Activated T-helper 1 cell treated with anti-CD3 and anti-CD28 coated beads, Interleukin-12 subunit alpha, Interleukin-12 subunit beta, Interleukin-2, Interleukin-4 antibody, amounts not matched to agents 30 ng/mL and 10 ng/mL and 1 ng/mL, durations not matched to agents 14 hours and 24 hours and 36 hours (primary cell): ENCODE measurements at regions of chr6 and their contacts with region 1.

Region 1: GRCh38 chr6:47787620-47788497 is 6.0 kb downstream of the OPN5 start:
- DNase-seq: peak; percentile 28
- H3K4me3 Mint-ChIP-seq: no peak overlapping the region
- H3K27ac Mint-ChIP-seq: no peak overlapping the region
- H3K4me1 Mint-ChIP-seq: peaks cover 6% of the 10 kb centered on the region
- H3K27me3 Mint-ChIP-seq: peaks cover 33% of the 10 kb centered on the region

Region 2: DNA sequence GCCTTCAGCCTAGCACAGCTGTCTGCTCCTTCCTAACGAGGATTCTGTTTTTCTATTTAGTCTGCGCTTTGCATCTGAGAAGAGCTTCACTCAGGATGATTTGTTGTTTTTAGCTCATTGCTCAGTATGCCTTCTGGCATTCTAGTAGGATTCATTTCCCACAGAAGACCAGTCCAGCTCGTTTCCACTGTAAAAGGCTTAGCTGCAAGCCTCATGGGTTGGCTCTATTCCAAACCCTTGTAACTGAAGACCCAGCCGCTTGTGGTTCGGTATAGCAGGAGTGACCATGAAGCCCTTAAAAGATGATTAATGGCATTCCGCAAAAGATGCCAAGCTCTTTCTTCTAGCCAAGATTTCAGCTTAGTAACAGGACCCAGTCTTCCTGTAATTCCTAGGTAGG is 752.9 kb before region 1 on chr6:
- intact Hi-C with region 1: no loop called
- DNase-seq: no peak
- H3K4me3 Mint-ChIP-seq: no peak overlapping the region
- H3K27ac Mint-ChIP-seq: no peak overlapping the region
- H3K4me1 Mint-ChIP-seq: no peaks in the 10 kb centered on the region
- H3K27me3 Mint-ChIP-seq: peaks cover 6% of the 10 kb centered on the region

Region 3: GRCh38 chr6:47524136-47524845 is 263.6 kb before region 1 on chr6:
- intact Hi-C with region 1: no loop called
- DNase-seq: no peak
- H3K4me3 Mint-ChIP-seq: no peak overlapping the region
- H3K27ac Mint-ChIP-seq: no peak overlapping the region
- H3K4me1 Mint-ChIP-seq: peaks cover 10% of the 10 kb centered on the region
- H3K27me3 Mint-ChIP-seq: no peaks in the 10 kb centered on the region

Region 4: GRCh38 chr6:48765352-48765961 is 977.6 kb after region 1 on chr6:
- intact Hi-C with region 1: loop called (anchors 10 kb)
- DNase-seq: no peak
- H3K4me3 Mint-ChIP-seq: no peak overlapping the region
- H3K27ac Mint-ChIP-seq: no peak overlapping the region
- H3K4me1 Mint-ChIP-seq: no peaks in the 10 kb centered on the region
- H3K27me3 Mint-ChIP-seq: no peaks in the 10 kb centered on the region

Region 5: DNA sequence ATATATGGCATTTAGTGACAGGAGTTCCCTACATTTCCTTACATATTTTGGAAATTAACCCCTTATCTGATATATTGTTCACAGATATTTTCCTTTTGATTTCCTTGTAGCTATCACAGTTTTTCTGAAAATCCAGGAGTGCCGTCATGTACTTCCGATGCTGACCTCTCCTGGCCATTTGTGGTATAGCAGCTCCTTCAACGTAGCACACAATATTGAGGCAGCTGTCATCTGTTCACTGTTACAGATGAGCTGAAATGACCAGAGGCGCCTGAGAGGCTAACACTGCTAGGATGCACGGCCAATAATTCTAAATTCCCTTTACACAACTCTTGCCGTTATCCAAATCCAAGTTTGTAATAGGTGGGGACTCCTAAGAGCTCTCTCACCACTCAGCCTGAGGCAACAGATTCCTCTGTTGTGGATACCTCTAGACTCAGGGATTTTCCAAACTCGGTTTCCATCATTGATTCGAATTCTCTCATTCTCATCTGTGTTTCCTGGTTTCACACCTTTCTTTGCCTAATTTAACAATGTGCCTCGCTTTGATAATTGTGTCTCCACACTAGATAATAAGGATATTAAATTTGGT is 1622.2 kb after region 1 on chr6:
- intact Hi-C with region 1: loop called (anchors 1 kb)
- DNase-seq: peak; percentile 21
- H3K4me3 Mint-ChIP-seq: no peak overlapping the region
- H3K27ac Mint-ChIP-seq: no peak overlapping the region
- H3K4me1 Mint-ChIP-seq: no peaks in the 10 kb centered on the region
- H3K27me3 Mint-ChIP-seq: peaks cover 2% of the 10 kb centered on the region